ENCODE measurements at regions of chr5 and their contacts with region 1.

Region 1: GRCh38 chr5:15003511-15003920 is 131.9 kb upstream of the ANKH start:
- DNase-seq: peak; percentile 82
- ATAC-seq: peak; percentile 94
- H3K4me3 ChIP-seq: no peak overlapping the region
- H3K4me3 Mint-ChIP-seq: no peak overlapping the region
- H3K27ac ChIP-seq: no peak overlapping the region
- H3K27ac Mint-ChIP-seq: no peak overlapping the region
- H3K4me1 ChIP-seq: peaks cover 11 to 14% of the 10 kb centered on the region in 2 donors
- H3K4me1 Mint-ChIP-seq: peaks cover 16% of the 10 kb centered on the region
- H3K27me3 ChIP-seq: peaks cover 0 to 3% (median 0%) of the 10 kb centered on the region in 4 experiments
- H3K27me3 Mint-ChIP-seq: peaks cover 5% of the 10 kb centered on the region
- CTCF ChIP-seq: peak; percentile 89

Region 2: DNA sequence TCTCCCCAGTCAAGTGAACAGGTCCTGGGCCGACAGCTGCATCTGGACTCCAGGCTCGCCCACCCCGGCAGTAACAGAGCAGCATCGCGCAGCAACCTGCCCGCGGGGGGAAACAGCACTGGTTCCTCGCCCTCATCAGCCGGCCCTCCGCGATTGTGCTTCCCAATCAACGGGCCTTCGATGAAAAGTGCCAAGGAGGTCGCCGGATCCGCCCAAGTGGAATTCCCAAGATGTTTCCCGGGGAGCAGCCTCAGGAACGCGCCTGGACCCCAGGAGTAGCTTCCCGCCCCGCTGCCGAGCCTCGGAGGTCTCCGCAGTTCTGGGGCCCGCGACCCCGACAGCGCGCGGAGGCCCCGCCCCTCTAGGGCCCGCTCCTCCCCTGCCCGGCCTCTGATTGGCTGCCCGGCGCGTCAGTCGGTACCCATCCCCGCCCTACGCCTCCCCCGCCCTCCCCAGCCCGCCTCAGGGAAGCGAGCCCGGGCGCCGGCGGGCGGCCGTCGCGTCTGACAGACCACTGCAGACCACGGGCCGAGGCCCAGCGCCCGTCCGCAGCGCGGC is 422.1 kb before region 1 on chr5 and contains the start of gene OTULINL:
- CTCF ChIA-PET with region 1: no interaction called
- POLR2A ChIA-PET with region 1: no interaction called
- intact Hi-C with region 1: loop called (anchors 10 kb)
- DNase-seq: peak; percentile 85
- ATAC-seq: peak; percentile 97
- H3K4me3 ChIP-seq: peak within 1 kb of the TSS; percentile 31 to 70 (median 62)
- H3K4me3 Mint-ChIP-seq: peak within 1 kb of the TSS; percentile 74
- H3K27ac ChIP-seq: no peak within 1 kb of the TSS
- H3K27ac Mint-ChIP-seq: no peak within 1 kb of the TSS
- H3K4me1 ChIP-seq: peaks cover 9 to 14% of the 10 kb centered on the region in 2 donors
- H3K4me1 Mint-ChIP-seq: peaks cover 5% of the 10 kb centered on the region
- H3K27me3 ChIP-seq: peaks cover 0 to 44% (median 18%) of the 10 kb centered on the region in 4 experiments
- H3K27me3 Mint-ChIP-seq: peaks cover 39% of the 10 kb centered on the region
- CTCF ChIP-seq: no peak
- total RNA-seq, gene OTULINL: 0.80 and 0.81 TPM in 2 replicates

Region 3: DNA sequence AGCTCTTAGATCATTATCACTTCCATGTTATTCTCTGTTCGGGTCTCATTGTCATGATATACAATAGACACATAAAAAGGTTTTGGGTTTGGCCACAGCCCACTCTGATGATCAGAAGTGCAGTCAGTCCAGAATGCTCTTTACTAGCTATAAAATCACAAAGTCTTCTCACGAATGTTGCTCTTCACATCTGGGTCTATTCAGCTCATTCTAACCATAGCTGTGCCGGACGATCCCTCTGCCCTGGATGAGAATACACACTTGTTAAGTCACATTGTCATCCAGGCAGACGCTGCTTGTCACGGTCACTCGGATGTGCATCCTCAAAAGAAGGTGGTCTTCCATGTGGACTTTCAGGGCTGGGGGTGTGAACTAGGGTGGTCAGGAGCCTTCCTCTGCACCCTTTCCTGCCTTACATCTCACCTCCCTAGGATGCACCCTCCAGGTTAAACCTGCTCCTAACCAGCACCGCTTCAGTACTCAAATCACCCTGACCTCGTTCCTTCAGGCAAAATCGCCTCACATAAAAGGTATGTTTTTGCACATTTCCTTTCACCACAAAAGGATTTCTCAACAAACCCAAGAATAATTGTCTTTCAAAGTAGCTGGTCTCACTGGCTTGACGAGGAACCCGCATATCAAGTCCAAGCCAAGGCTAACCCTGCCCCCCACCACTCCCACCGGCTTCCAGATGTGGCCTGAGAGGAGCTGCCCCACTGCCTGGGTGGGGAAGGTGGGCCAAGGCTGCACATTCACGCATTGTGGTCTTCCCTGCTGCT is 153.8 kb before region 1 on chr5:
- CTCF ChIA-PET with region 1: no interaction called
- POLR2A ChIA-PET with region 1: no interaction called
- intact Hi-C with region 1: no loop called
- DNase-seq: no peak
- ATAC-seq: no peak
- H3K4me3 ChIP-seq: no peak overlapping the region
- H3K4me3 Mint-ChIP-seq: no peak overlapping the region
- H3K27ac ChIP-seq: no peak overlapping the region
- H3K27ac Mint-ChIP-seq: no peak overlapping the region
- H3K4me1 ChIP-seq: peaks cover 8 to 9% of the 10 kb centered on the region in 2 donors
- H3K4me1 Mint-ChIP-seq: peaks cover 21% of the 10 kb centered on the region
- H3K27me3 ChIP-seq: no peaks in the 10 kb centered on the region
- H3K27me3 Mint-ChIP-seq: no peaks in the 10 kb centered on the region
- CTCF ChIP-seq: no peak

Region 4: GRCh38 chr5:14871210-14872069 is 132.1 kb before region 1 on chr5 and contains the start of gene ANKH:
- CTCF ChIA-PET with region 1: interaction called, 17 read pairs
- POLR2A ChIA-PET with region 1: no interaction called
- intact Hi-C with region 1: no loop called
- DNase-seq: peak; percentile 90
- ATAC-seq: peak; percentile 87
- H3K4me3 ChIP-seq: peak within 1 kb of the TSS; percentile 7 to 86 (median 64)
- H3K4me3 Mint-ChIP-seq: peak within 1 kb of the TSS; percentile 94
- H3K27ac ChIP-seq: peak within 1 kb of the TSS; percentile 24 to 74
- H3K27ac Mint-ChIP-seq: peak within 1 kb of the TSS; percentile 88
- H3K4me1 ChIP-seq: peaks cover 13 to 22% of the 10 kb centered on the region in 2 donors
- H3K4me1 Mint-ChIP-seq: peaks cover 25% of the 10 kb centered on the region
- H3K27me3 ChIP-seq: peaks cover 0 to 3% (median 0%) of the 10 kb centered on the region in 4 experiments
- H3K27me3 Mint-ChIP-seq: peaks cover 9% of the 10 kb centered on the region
- CTCF ChIP-seq: no peak
- total RNA-seq, gene ANKH: 71.1 and 71.3 TPM in 2 replicates

Region 5: DNA sequence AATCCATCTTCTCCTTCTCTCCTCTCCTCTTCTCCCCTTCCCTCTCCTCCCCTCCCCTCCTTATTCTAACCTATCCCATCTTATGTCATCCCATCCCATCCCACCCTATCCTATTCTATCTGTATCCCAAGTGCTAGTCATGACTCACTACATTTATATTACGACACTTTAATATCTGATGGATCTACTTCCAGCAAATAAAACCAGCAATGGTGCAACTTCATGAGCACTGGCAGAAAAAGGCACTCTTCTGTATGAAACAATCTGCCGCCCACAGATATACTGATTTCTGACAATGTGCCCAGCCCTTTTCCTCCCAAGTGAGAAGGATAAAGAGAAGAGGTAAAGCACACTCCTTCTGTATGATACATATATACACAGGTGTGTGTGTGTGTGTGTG is 45.3 kb before region 1 on chr5:
- CTCF ChIA-PET with region 1: interaction called, 226 read pairs
- POLR2A ChIA-PET with region 1: no interaction called
- intact Hi-C with region 1: loop called (anchors 1 kb)
- DNase-seq: no peak
- ATAC-seq: no peak
- H3K4me3 ChIP-seq: no peak overlapping the region
- H3K4me3 Mint-ChIP-seq: no peak overlapping the region
- H3K27ac ChIP-seq: no peak overlapping the region
- H3K27ac Mint-ChIP-seq: no peak overlapping the region
- H3K4me1 ChIP-seq: no peaks in the 10 kb centered on the region
- H3K4me1 Mint-ChIP-seq: no peaks in the 10 kb centered on the region
- H3K27me3 ChIP-seq: no peaks in the 10 kb centered on the region
- H3K27me3 Mint-ChIP-seq: peaks cover 5% of the 10 kb centered on the region
- CTCF ChIP-seq: no peak

Region 6: GRCh38 chr5:15013654-15014463 is 10.3 kb after region 1 on chr5:
- CTCF ChIA-PET with region 1: interaction called, 25 read pairs
- POLR2A ChIA-PET with region 1: no interaction called
- intact Hi-C with region 1: no loop called
- DNase-seq: peak; percentile 59
- ATAC-seq: peak; percentile 57
- H3K4me3 ChIP-seq: no peak overlapping the region
- H3K4me3 Mint-ChIP-seq: no peak overlapping the region
- H3K27ac ChIP-seq: no peak overlapping the region
- H3K27ac Mint-ChIP-seq: no peak overlapping the region
- H3K4me1 ChIP-seq: no peaks in the 10 kb centered on the region
- H3K4me1 Mint-ChIP-seq: no peaks in the 10 kb centered on the region
- H3K27me3 ChIP-seq: peaks cover 0 to 3% (median 0%) of the 10 kb centered on the region in 4 experiments
- H3K27me3 Mint-ChIP-seq: peaks cover 9% of the 10 kb centered on the region
- CTCF ChIP-seq: peak; percentile 76

Region 7: GRCh38 chr5:15069407-15069905 is 65.9 kb after region 1 on chr5:
- CTCF ChIA-PET with region 1: no interaction called
- POLR2A ChIA-PET with region 1: no interaction called
- intact Hi-C with region 1: no loop called
- DNase-seq: no peak
- ATAC-seq: no peak
- H3K4me3 ChIP-seq: no peak overlapping the region
- H3K4me3 Mint-ChIP-seq: no peak overlapping the region
- H3K27ac ChIP-seq: no peak overlapping the region
- H3K27ac Mint-ChIP-seq: no peak overlapping the region
- H3K4me1 ChIP-seq: no peaks in the 10 kb centered on the region
- H3K4me1 Mint-ChIP-seq: no peaks in the 10 kb centered on the region
- H3K27me3 ChIP-seq: peaks cover 0 to 6% (median 0%) of the 10 kb centered on the region in 4 experiments
- H3K27me3 Mint-ChIP-seq: no peaks in the 10 kb centered on the region
- CTCF ChIP-seq: no peak

Region 8: GRCh38 chr5:16049761-16050160 is 1046.2 kb after region 1 on chr5:
- CTCF ChIA-PET with region 1: no interaction called
- POLR2A ChIA-PET with region 1: no interaction called
- intact Hi-C with region 1: no loop called
- DNase-seq: no peak
- ATAC-seq: no peak
- H3K4me3 ChIP-seq: no peak overlapping the region
- H3K4me3 Mint-ChIP-seq: no peak overlapping the region
- H3K27ac ChIP-seq: no peak overlapping the region
- H3K27ac Mint-ChIP-seq: no peak overlapping the region
- H3K4me1 ChIP-seq: no peaks in the 10 kb centered on the region
- H3K4me1 Mint-ChIP-seq: no peaks in the 10 kb centered on the region
- H3K27me3 ChIP-seq: no peaks in the 10 kb centered on the region
- H3K27me3 Mint-ChIP-seq: no peaks in the 10 kb centered on the region
- CTCF ChIP-seq: no peak

Measured in B cell (primary cell).